ENCODE measurements at regions of chr13 and their contacts with region 1.

Region 1: DNA sequence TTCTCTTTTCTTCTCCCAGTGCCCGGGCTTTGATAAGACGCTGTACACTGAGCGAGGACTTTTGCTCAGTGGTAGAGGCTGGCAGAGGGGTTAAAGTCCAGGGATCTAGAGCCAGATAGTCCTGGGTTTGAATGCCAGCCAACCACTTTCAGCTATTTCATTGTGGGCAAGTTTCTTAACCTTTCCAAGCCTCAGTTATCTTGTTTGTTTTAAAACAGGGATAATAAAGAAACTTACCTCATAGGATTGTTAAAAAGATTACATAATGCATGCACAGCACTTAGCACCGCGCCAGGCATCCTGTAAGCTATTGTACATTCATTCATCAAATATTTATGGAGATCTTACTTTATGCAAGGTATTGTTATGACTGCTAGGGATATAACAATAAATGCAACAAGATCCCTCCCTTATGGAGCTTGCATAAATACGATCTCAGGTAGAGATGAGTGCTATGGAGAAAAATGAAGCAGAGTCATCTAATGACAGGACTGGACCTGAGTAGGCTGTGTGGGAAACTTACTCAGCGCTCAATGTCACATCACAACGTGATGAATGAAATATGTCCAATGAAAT is 70.8 kb downstream of the LNX2 start:
- DNase-seq: peak; percentile 60 to 88 (median 61)
- ATAC-seq: peak; percentile 96
- H3K4me3 ChIP-seq: no peak overlapping the region
- H3K4me1 ChIP-seq: peaks cover 20% of the 10 kb centered on the region
- CTCF ChIP-seq: no peak

Region 2: DNA sequence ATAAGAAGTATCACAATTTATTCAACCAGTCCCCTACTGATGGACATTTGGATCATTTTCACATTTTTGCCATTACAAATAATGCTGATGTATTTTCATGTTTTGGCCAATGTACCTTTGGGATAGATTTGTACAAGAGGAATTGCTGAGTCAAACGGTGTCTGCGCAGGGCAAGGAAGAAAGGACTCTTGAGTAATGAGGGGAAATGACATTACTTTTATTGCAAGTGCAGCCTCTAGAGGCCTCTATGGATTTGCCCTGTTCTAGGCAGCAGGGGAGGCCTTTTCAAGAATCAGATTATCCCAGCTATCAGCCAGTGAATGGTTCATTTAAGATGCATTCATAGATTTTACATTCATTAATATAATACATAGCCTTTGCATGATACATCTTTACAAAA is 158.0 kb before region 1 on chr13:
- intact Hi-C with region 1: loop called in 1 of 2 experiments (anchors 10 kb)
- DNase-seq: no peak
- ATAC-seq: no peak
- H3K4me3 ChIP-seq: no peak overlapping the region
- H3K4me1 ChIP-seq: no peaks in the 10 kb centered on the region
- CTCF ChIP-seq: no peak